ENCODE measurements at regions of chr2 and their contacts with region 1.

Region 1: DNA sequence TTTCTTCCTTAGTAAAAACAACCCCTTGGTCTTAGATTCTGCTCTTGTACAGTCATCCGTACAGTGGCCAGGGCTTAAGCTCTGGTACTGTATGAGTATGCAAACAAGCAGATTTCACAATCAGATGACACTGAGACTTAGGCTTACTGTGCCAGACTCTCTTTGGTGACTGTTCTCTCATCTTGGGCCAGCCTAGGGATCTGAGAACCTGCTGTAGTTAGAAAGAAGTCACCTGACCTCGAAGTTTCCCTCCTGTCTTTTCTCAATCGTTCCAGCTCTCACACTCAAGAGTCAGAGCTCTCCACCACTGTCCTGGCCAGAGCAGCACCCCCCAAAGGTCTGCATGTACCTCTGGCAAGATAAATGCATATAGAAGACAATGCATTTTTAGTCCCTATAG is 63.2 kb downstream of the ZEB2 start:
- DNase-seq: no peak
- H3K4me3 ChIP-seq: no peak overlapping the region
- H3K27ac ChIP-seq: peak overlapping the region; percentile 75
- H3K4me1 ChIP-seq: peaks cover 100% of the 10 kb centered on the region
- H3K27me3 ChIP-seq: no peaks in the 10 kb centered on the region
- CTCF ChIP-seq: no peak

Region 2: DNA sequence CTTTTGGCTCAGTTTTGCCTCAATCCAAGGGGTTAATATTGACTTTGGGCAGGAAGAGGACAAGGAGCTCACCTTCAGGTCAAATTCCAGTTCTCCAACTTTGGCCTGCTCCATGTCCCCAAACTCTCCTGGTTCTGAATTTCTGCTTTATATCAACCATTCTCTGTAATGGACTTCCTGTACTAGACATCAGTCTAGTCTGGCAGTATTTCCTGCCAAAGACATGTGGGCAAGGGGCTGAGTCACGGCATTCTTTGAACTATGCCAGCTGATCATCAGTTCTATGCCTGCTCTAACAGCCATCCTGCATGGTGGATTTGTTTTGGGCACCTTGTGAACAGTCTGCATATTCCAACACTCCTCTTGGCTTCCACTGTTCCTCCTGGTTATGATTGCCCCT is 136.2 kb before region 1 on chr2:
- intact Hi-C with region 1: no loop called
- DNase-seq: no peak
- H3K4me3 ChIP-seq: no peak overlapping the region
- H3K27ac ChIP-seq: no peak overlapping the region
- H3K4me1 ChIP-seq: peaks cover 6% of the 10 kb centered on the region
- H3K27me3 ChIP-seq: no peaks in the 10 kb centered on the region
- CTCF ChIP-seq: no peak

Region 3: GRCh38 chr2:144505245-144505831 is 48.7 kb after region 1 on chr2:
- intact Hi-C with region 1: loop called (anchors 10 kb)
- DNase-seq: no peak
- H3K4me3 ChIP-seq: peak overlapping the region; percentile 41
- H3K27ac ChIP-seq: peak overlapping the region; percentile 98
- H3K4me1 ChIP-seq: peaks cover 93% of the 10 kb centered on the region
- H3K27me3 ChIP-seq: no peaks in the 10 kb centered on the region
- CTCF ChIP-seq: no peak

Region 4: DNA sequence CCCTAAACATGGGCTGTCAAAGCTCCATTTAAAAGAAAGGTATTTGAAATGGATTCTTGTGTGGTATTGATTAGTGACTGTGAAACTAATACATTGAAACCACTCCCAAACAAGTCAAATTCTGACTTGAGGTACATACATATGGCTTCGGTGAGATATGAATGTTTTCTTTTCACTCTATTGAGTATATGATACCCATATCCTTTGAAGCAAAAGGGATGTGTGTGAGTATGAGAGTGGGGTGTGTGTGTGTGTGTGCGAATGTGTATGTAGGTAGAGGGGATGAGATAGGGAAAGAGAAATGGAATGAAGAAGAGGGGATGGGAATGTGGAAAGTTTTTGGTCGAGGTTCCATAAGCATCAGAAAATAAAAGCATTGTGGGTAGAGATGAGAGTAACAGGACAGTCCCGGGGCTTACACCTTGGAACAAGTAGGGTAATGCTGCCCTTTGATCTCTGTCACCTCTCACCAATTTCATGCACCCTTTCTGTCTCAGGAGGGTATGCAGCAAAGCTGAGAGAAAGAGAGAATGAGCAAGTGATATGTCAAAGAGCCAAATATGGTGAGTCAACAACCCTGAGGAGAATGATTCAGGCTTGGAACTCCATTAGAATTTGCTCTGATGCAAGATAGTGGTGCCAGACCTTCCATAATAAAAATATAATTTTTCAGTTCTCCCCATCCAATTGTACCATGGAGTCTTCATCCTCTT is 127.2 kb after region 1 on chr2:
- intact Hi-C with region 1: no loop called
- DNase-seq: no peak
- H3K4me3 ChIP-seq: no peak overlapping the region
- H3K27ac ChIP-seq: no peak overlapping the region
- H3K4me1 ChIP-seq: peaks cover 9% of the 10 kb centered on the region
- H3K27me3 ChIP-seq: no peaks in the 10 kb centered on the region
- CTCF ChIP-seq: no peak